ENCODE measurements at regions of chr1 and their contacts with region 1.

Region 1: DNA sequence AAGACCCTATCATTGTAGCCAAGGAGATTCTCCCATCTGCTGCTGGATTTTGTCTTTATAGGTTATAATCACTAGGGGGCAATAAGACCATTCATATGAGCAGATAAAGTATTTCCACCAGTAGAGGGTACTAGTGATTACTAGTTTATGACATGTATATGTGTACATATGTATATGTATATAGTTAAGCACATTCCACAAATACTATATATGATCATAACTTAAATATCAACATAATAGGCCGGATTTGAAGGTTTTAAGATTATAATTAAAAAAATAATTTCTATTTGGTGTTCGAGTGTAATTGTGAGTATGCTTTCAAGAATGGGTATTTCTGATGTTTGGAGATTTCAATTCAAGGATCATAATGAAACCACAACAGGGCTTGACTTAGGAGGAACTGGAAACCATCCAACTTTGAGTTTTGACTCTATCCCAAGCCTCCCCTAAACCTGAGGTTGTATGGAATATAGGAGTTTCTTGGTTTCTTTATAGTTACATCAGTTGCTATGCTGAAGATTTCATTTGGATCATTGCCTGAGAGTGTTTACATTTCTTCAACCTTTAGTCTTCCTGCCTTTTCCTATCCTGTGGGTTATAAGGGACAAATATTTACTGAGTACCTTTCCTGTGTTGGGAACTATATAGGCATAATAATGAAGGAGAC is 16.9 kb downstream of the TCEANC2 start:
- DNase-seq: no peak
- H3K4me3 ChIP-seq: no peak overlapping the region
- H3K27ac ChIP-seq: no peak overlapping the region
- H3K4me1 ChIP-seq: no peaks in the 10 kb centered on the region
- H3K27me3 ChIP-seq: no peaks in the 10 kb centered on the region
- CTCF ChIP-seq: peak; percentile 68 to 86 (median 82)
- POLR2A ChIP-seq: no peak

Region 2: DNA sequence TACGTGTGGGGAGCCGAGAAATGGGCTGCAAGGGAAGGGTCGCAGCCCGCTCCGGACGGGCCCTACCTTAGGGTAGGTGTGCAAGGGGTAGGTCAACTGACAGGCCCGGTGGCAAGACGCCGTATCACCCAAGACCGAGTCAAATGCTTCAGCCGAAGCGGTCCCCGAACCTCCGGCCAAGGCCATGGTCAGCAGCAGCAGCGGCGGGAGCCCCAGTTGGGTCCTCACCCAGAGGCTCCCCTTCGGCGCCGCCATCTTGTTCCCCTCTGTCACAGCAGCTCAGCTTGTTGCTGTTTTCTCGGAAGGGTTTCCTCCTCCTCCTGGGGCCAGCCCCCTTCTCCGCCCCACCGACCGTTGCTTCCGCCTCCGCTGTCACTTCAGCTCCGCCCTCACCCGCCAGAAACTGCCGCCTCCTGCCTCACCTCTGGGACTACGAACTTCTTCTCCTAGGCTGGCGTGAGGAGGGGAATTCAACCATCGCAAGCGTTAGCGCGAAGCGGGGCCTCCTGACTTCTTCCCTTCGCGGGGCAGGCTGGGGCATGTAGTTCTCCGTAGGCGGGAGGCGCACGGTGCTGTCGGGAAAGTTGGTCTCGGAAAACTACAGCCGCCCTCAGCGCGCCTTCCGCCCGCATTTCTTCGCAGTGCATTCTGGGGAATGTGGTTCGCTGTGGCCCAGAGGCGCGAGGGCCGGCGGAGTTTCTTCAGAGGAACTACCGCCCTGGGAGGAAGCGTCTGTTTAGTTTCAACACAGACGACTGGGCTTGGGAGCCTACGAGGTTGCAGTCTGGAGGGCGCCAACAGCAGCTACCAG is 17.2 kb before region 1 on chr1 and contains the starts of genes TCEANC2 and TMEM59:
- intact Hi-C with region 1: no loop called
- DNase-seq: peak; percentile 97
- H3K4me3 ChIP-seq: peak within 1 kb of the TSS; percentile 73 to 90
- H3K27ac ChIP-seq: peak within 1 kb of the TSS; percentile 90 to 91
- H3K4me1 ChIP-seq: peaks cover 0 to 4% of the 10 kb centered on the region in 2 donors
- H3K27me3 ChIP-seq: no peaks in the 10 kb centered on the region
- CTCF ChIP-seq: peak in 2 of 4 experiments; percentile 17 to 20
- POLR2A ChIP-seq: peak; percentile 68 to 77
- total RNA-seq, gene TCEANC2: 1.5 to 7.3 (median 3.2) TPM
- total RNA-seq, gene TMEM59: 82.2 to 327 (median 301) TPM

Region 3: GRCh38 chr1:54153548-54154439 is 83.5 kb after region 1 on chr1:
- intact Hi-C with region 1: no loop called
- DNase-seq: peak; percentile 71 to 79
- H3K4me3 ChIP-seq: no peak overlapping the region
- H3K27ac ChIP-seq: peak overlapping the region; percentile 15 to 18
- H3K4me1 ChIP-seq: no peaks in the 10 kb centered on the region
- H3K27me3 ChIP-seq: no peaks in the 10 kb centered on the region
- CTCF ChIP-seq: no peak
- POLR2A ChIP-seq: no peak

Region 4: GRCh38 chr1:54810100-54810942 is 740.0 kb after region 1 on chr1:
- intact Hi-C with region 1: loop called (anchors 10 kb)
- DNase-seq: peak; percentile 46 to 65
- H3K4me3 ChIP-seq: no peak overlapping the region
- H3K27ac ChIP-seq: no peak overlapping the region
- H3K4me1 ChIP-seq: no peaks in the 10 kb centered on the region
- H3K27me3 ChIP-seq: no peaks in the 10 kb centered on the region
- CTCF ChIP-seq: peak; percentile 63 to 91 (median 84)
- POLR2A ChIP-seq: no peak

Measured in uterus (tissue), 4 donors.